Esophagus muscularis mucosa (tissue), 4 donors: ENCODE measurements at regions of chr11 and their contacts with region 1.

Region 1: GRCh38 chr11:125164422-125165110 is at the start of gene PKNOX2:
- DNase-seq: no peak
- H3K4me3 ChIP-seq: peak within 1 kb of the TSS; percentile 72 to 77 (median 74)
- H3K27ac ChIP-seq: peak within 1 kb of the TSS; percentile 76 to 90 (median 87)
- H3K4me1 ChIP-seq: peaks cover 13 to 58% (median 50%) of the 10 kb centered on the region in 4 donors
- H3K27me3 ChIP-seq: peaks cover 0 to 14% (median 0%) of the 10 kb centered on the region in 4 donors
- CTCF ChIP-seq: peak; percentile 50 to 83 (median 69)
- EP300 ChIP-seq: no peak
- POLR2A ChIP-seq: no peak
- total RNA-seq, gene PKNOX2: 0.83 to 4.1 (median 2.5) TPM

Region 2: DNA sequence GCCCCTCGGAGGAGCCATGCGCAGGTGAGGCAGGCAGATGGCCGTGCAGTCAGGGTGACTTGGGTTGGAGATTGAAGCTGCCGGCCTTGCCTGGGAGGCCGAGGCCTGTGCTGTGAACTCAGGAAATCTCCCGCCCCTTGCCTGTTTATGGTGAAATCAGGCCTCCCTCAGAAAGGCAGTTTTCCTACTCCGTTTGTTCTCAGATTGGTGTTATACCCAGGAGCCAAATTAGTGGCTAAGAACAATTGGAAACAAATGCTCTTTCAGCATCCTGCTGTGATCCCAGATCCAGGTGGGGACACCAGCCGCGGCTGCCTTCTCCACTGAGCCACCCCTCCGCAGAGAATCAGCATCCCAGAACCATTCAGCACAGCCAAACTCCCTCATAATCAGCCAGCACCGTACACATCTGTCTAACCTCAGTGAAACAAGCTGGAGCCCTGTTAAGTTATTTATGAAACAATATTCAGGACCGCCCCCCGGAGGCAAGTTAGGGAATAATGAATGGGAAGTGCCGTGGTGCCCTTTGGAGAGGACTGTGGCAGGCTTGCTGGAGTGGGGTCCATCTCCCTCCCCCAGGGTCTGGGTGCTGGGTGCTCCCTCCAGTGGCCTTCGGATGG is 59.9 kb after region 1 on chr11:
- intact Hi-C with region 1: loop called (anchors 5 kb)
- DNase-seq: no peak
- H3K4me3 ChIP-seq: no peak overlapping the region
- H3K27ac ChIP-seq: peak overlapping the region in 3 of 4 donors; percentile 34 to 48 (median 44)
- H3K4me1 ChIP-seq: peaks cover 4 to 13% (median 9%) of the 10 kb centered on the region in 4 donors
- H3K27me3 ChIP-seq: no peaks in the 10 kb centered on the region
- CTCF ChIP-seq: peak in 1 of 3 experiments; percentile 37
- EP300 ChIP-seq: no peak
- POLR2A ChIP-seq: no peak

Region 3: DNA sequence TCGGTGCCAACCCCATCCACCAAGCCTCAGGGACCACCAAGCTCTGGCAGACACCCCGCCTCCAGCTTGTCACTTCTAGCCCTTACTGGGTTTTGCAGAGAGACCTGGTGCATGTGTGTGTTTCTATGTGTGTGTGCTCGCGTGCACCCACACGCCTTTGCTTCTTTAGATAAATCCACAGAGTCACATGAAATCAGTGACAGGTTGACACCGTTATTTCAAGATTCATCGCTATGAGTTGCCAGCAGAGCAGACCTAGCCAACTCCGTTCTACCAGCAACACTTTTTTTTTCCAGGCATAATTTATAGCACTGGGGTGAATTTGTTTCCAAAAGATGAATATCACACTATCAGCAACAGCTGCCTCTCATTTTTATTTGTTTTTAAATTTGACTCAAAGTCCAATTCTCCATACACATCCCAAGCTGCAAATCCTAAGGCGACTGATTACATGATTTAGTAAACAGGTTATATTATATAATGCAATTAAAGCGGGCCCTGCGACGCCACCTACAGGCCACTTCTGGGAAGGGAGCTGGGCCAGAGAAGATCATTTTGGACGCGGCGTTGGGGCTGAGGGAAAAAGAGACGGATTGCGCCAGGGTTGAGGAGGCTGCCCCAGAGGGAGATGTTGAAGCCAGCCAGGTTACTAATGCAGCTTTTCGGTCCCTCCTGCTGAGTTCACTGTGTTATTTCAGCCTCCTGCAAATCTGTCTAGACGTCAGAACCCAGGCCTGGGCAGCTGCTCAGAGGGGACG is 181.0 kb after region 1 on chr11:
- intact Hi-C with region 1: loop called (anchors 2 kb)
- DNase-seq: peak; percentile 94
- H3K4me3 ChIP-seq: no peak overlapping the region
- H3K27ac ChIP-seq: peak overlapping the region; percentile 33 to 70 (median 56)
- H3K4me1 ChIP-seq: peaks cover 11 to 38% (median 34%) of the 10 kb centered on the region in 4 donors
- H3K27me3 ChIP-seq: no peaks in the 10 kb centered on the region
- CTCF ChIP-seq: peak; percentile 86 to 95 (median 93)
- EP300 ChIP-seq: no peak
- POLR2A ChIP-seq: no peak

Region 4: DNA sequence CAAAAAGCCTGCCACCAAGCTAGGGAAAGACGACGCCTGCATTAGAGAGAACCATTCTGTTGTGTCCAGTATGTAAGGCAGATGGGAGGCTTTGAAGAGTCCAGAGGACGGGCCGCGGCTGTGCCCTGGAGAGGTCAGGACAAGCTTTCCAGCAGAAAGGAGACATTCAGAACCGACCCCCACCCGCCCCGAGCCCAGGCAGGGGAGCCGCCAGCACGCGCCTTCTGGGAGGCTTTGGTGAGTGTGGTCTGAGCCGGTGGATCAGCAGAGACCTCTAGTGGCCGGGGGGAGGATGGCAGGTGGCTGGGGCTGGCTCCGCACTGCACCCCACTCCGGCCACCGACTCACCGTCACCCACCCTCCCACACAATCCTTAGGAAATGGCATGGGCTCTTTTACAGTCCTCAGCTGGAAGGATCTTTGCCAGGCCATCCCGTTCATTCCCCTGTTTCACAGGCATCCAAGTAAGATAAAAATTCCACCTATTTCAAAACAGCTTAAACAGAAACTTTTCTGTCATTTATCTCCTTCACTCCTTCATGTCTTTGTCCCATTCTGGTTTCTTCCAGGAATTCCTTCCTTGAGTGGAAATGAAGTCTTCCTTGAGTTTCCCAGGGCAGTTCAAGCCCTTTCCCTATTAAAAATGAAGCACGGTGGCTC is 240.3 kb after region 1 on chr11:
- intact Hi-C with region 1: loop called (anchors 5 kb)
- DNase-seq: no peak
- H3K4me3 ChIP-seq: peak overlapping the region in 3 of 4 donors; percentile 4 to 25 (median 25)
- H3K27ac ChIP-seq: no peak overlapping the region
- H3K4me1 ChIP-seq: peaks cover 0 to 16% (median 8%) of the 10 kb centered on the region in 4 donors
- H3K27me3 ChIP-seq: peaks cover 0 to 13% (median 2%) of the 10 kb centered on the region in 4 donors
- CTCF ChIP-seq: peak in 2 of 3 experiments; percentile 94 to 95
- EP300 ChIP-seq: no peak
- POLR2A ChIP-seq: no peak

Region 5: GRCh38 chr11:125494974-125495725 is 330.6 kb after region 1 on chr11:
- intact Hi-C with region 1: loop called (anchors 5 kb)
- DNase-seq: peak; percentile 84
- H3K4me3 ChIP-seq: peak overlapping the region; percentile 70 to 86 (median 80)
- H3K27ac ChIP-seq: peak overlapping the region; percentile 86 to 91 (median 88)
- H3K4me1 ChIP-seq: peaks cover 5 to 30% (median 22%) of the 10 kb centered on the region in 4 donors
- H3K27me3 ChIP-seq: no peaks in the 10 kb centered on the region
- CTCF ChIP-seq: no peak
- EP300 ChIP-seq: no peak
- POLR2A ChIP-seq: peak; percentile 19